ENCODE measurements at regions of chr1 and their contacts with region 1.

Region 1: DNA sequence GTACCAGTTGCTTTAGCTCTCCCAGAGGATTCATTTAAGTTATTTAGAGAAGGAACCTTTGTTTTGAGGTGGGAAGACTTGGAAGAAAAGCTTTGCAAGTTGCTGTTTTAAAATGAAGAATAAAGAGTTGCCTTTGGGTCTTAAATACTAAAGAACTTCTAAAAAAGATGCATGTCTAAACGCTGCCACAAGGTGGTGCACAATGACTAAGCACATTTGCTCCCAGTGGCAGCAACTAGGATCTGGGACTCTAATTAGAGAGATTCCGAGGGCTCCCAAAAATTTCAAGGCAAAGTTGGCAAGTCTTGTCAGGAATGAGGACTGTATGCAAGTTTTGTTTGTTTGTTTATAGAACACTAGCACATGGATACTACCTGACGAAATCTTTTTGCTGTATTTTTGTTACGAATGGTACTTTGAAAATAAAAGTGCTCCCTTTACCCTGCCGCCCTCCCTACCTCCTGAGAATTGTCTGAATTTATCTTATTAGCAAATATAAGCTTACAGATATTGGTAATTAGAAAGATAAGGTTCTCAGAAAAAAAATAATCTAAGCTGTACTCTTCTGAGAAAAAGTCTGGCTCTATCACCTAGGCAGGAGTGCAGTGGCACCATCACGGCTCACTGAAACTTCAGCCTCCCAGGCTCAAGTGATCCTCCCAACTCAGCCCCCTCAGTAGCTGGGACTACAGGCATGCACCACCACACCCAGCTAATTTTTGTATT is 121.8 kb downstream of the HFM1 start:
- DNase-seq: peak; percentile 40 to 80 (median 65)
- H3K4me3 ChIP-seq: peak overlapping the region in 1 of 4 donors; percentile 1
- H3K27ac ChIP-seq: no peak overlapping the region
- H3K4me1 ChIP-seq: peaks cover 0 to 4% of the 10 kb centered on the region in 2 donors
- H3K27me3 ChIP-seq: no peaks in the 10 kb centered on the region
- CTCF ChIP-seq: peak; percentile 76 to 85 (median 82)
- POLR2A ChIP-seq: no peak

Region 2: GRCh38 chr1:91165033-91165654 is 117.7 kb before region 1 on chr1:
- intact Hi-C with region 1: loop called in 1 of 2 experiments (anchors 5 kb)
- DNase-seq: peak; percentile 59 to 88 (median 78)
- H3K4me3 ChIP-seq: no peak overlapping the region
- H3K27ac ChIP-seq: no peak overlapping the region
- H3K4me1 ChIP-seq: no peaks in the 10 kb centered on the region
- H3K27me3 ChIP-seq: no peaks in the 10 kb centered on the region
- CTCF ChIP-seq: peak; percentile 69 to 89 (median 82)
- POLR2A ChIP-seq: no peak

Region 3: DNA sequence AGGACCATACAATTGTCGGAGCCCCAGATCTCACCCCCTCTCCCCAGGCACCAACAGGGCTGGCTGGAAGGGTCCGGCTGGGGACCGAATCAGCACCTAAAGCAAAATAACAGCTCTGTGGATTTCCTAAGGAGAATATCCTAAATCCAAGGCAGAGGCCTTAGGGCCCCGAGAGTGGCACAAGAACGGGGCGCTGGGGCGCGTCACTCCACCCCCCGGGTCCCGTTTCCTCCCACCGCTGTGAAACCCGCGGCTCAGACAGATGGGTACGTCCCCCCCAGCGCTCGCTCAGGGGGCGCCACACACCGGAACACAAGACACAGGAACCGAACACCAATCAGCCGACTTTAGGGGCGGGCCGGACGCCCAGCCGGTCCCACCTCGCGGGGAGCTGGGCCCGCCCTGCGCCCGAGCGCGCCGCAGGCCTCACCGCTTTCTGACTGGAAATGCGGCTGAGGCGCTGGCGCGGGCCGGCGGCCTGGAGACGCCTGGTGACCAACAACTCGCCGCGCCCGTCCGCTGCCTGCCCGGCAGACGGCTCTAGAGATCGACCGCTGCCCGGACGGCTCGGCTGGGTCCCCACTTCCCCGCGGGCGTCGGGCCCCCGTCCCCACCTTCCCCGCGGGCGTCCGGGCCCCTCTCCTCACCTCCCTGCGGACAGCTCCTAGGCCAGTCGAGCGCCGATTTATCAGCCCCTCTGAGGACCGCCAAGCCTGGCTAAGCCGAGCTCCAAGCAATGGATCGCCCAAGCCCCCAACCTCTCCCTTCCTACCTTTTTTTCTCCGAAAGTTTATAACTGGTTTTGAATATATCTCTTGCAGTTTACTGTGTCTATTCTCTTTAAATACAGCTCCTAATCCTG is 121.5 kb after region 1 on chr1 and contains the start of gene HFM1:
- intact Hi-C with region 1: loop called (anchors 5 to 10 kb)
- DNase-seq: peak; percentile 68 to 85 (median 75)
- H3K4me3 ChIP-seq: peak within 1 kb of the TSS in 3 of 4 donors; percentile 24 to 65 (median 33)
- H3K27ac ChIP-seq: peak within 1 kb of the TSS in 3 of 5 donors; percentile 22 to 85 (median 84)
- H3K4me1 ChIP-seq: peaks cover 0 to 26% of the 10 kb centered on the region in 2 donors
- H3K27me3 ChIP-seq: no peaks in the 10 kb centered on the region
- CTCF ChIP-seq: no peak
- POLR2A ChIP-seq: peak; percentile 27 to 44
- total RNA-seq, gene HFM1: 0.17 to 4.0 (median 0.80) TPM in 8 of 9 donors, not detected in the other

Region 4: DNA sequence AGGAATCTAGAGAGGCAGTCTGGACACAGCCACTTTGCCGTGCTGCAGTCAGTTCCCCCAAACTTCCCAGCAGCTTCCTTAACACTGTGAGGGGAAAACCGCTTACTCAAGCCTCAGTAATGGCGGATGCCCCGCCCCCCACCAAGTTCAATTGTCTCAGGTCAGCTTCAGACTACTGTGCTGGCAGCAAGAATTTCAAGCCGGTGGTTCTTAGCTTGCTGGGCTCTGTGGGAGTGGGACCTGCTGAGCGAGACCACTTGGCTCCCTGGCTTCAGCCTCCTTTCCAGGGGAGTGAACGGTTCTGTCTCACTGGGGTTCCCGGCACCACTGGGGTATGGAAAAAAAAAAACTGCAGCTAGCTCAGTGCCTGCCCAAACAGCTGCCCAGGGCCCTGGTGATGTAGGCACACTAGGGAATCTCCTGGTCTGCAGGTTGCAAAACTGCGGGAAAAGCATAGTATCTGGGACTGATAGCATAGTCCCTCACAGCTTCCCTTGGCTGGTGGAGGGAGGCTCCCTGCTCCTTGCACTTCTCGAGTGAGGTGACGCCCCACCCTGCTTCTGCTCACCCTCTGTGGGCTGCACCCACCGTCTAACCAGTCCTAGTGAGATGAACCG is 145.4 kb after region 1 on chr1:
- intact Hi-C with region 1: no loop called
- DNase-seq: no peak
- H3K4me3 ChIP-seq: no peak overlapping the region
- H3K27ac ChIP-seq: no peak overlapping the region
- H3K4me1 ChIP-seq: no peaks in the 10 kb centered on the region
- H3K27me3 ChIP-seq: no peaks in the 10 kb centered on the region
- CTCF ChIP-seq: no peak
- POLR2A ChIP-seq: no peak

Region 5: DNA sequence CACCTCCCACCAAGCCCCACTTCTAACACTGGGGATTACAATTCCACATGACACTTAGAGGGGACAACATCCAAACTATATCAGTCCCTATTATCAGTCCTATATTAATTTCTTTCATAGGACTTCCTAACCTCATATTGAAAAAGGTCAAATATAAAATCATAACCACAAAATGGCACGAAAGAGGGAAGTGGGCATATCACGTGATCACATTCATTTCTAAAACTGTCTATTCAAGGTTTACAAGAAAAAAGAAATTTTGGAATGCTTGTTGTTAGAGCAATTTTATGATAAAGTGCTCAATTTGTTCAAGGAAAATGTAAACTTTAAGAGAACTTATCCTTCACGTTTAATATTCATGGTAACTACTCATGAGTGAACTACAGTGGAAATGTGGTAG is 204.6 kb after region 1 on chr1:
- intact Hi-C with region 1: loop called in 1 of 2 experiments (anchors 10 kb)
- DNase-seq: no peak
- H3K4me3 ChIP-seq: no peak overlapping the region
- H3K27ac ChIP-seq: no peak overlapping the region
- H3K4me1 ChIP-seq: no peaks in the 10 kb centered on the region
- H3K27me3 ChIP-seq: no peaks in the 10 kb centered on the region
- CTCF ChIP-seq: no peak
- POLR2A ChIP-seq: no peak

Region 6: DNA sequence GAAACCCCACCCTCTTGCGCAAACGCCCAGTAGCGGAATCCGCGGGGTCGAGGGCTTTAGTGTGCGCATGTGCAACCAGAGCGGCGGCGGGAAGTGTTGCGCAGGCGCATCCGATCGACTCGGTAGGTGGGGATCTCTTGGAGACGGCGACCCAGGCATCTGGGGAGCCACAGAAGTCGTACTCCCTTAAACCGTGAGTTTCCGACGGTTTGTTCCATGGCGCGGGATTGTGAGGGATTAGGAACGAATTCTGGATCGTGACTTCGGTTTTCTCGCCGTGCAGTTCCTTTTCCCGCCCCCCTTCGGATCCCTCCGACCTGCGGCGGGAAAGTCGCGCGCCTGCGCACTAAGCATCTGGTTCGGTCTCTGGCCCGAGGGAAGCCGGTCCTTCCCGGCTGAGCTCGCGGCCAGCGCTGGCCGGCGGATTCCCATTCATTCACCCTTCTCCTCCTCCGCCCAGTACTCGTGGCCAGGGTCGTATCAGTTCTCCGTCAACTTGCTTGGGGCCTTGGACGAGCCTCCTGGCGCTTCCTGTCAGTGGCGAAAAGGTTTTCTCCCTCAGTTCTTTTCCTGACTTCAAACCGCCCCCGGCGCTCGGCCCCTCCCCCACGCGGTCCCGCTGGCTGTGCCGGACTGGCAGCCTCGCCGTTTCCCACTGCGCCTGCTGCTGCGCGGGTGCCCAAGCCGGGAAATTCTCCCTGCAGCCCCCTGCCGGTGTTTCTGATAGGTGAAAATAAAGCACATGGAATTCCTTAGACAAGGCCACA is 218.1 kb after region 1 on chr1 and contains the start of gene CDC7:
- intact Hi-C with region 1: loop called in 1 of 2 experiments (anchors 10 kb)
- DNase-seq: peak; percentile 85 to 91 (median 90)
- H3K4me3 ChIP-seq: peak within 1 kb of the TSS; percentile 16 to 88 (median 64)
- H3K27ac ChIP-seq: peak within 1 kb of the TSS; percentile 50 to 83 (median 65)
- H3K4me1 ChIP-seq: peaks cover 13 to 22% of the 10 kb centered on the region in 2 donors
- H3K27me3 ChIP-seq: no peaks in the 10 kb centered on the region
- CTCF ChIP-seq: peak; percentile 16 to 51 (median 32)
- POLR2A ChIP-seq: peak; percentile 7 to 20
- total RNA-seq, gene CDC7: 1.6 to 15.7 (median 3.5) TPM

Measured in adrenal gland (tissue), 19 donors.